ENCODE measurements at regions of chr12 and their contacts with region 1.

Region 1: DNA sequence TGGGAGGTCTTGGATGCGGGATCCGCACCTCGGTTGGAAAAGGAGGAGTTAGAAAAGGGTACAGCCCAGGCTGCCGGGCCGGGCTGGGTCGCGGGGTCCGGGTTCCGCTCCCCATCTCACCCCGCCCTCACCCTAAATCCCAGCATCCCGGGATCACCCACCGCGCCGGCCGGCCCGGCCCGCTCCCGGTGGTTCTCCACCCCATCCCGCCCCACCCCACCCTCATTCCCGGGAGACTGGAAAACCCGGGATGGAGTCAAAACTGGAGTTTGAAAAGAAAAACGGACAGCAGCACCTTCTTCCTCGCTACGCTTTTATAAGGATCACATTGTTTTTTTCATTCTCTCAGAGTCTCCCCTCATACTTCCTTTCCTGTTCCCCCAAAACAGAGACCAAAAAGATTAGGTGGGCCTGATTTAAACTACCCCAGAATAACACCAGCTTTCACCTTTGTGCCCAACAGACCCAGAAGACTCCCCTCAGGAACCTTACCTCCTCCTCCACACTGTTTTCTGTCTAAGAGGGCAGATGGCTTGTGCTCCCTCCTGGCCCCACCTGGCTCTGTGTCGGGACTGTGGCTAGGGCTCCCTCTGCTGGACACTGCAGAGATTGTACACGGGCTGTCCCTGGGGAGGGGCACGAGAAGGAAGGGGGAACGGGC is 2.8 kb downstream of the GLI1 start:
- DNase-seq: peak; percentile 80 to 95
- ATAC-seq: peak; percentile 66 to 83 (median 66)
- H3K4me3 ChIP-seq: peak overlapping the region; percentile 34
- H3K4me3 Mint-ChIP-seq: peak overlapping the region; percentile 93
- H3K27ac ChIP-seq: no peak overlapping the region
- H3K27ac Mint-ChIP-seq: peak overlapping the region; percentile 76 to 96
- H3K4me1 ChIP-seq: peaks cover 47% of the 10 kb centered on the region
- H3K4me1 Mint-ChIP-seq: peaks cover 59 to 63% of the 10 kb centered on the region in 2 donors
- H3K27me3 ChIP-seq: peaks cover 6% of the 10 kb centered on the region
- H3K27me3 Mint-ChIP-seq: peaks cover 0 to 15% of the 10 kb centered on the region in 2 donors
- CTCF ChIP-seq: peak; percentile 93

Region 2: GRCh38 chr12:57430931-57431720 is 31.3 kb before region 1 on chr12 and contains the start of gene R3HDM2:
- intact Hi-C with region 1: loop called (anchors 2 kb)
- DNase-seq: peak; percentile 95 to 98
- ATAC-seq: peak; percentile 86 to 93 (median 88)
- H3K4me3 ChIP-seq: peak within 1 kb of the TSS; percentile 68
- H3K4me3 Mint-ChIP-seq: peak within 1 kb of the TSS; percentile 97
- H3K27ac ChIP-seq: peak within 1 kb of the TSS; percentile 99
- H3K27ac Mint-ChIP-seq: peak within 1 kb of the TSS; percentile 99 to 100
- H3K4me1 ChIP-seq: peaks cover 26% of the 10 kb centered on the region
- H3K4me1 Mint-ChIP-seq: peaks cover 35 to 41% of the 10 kb centered on the region in 2 donors
- H3K27me3 ChIP-seq: no peaks in the 10 kb centered on the region
- H3K27me3 Mint-ChIP-seq: no peaks in the 10 kb centered on the region
- CTCF ChIP-seq: no peak
- total RNA-seq, gene R3HDM2: 110 to 124 (median 123) TPM